Esophagus squamous epithelium (tissue), 5 donors: ENCODE measurements at regions of chr6 and their contacts with region 1.

Region 1: GRCh38 chr6:36442671-36443470 is at the starts of genes KCTD20 and PXT1:
- DNase-seq: peak; percentile 20
- H3K4me3 ChIP-seq: peak within 1 kb of the TSS; percentile 80 to 99 (median 90)
- H3K27ac ChIP-seq: peak within 1 kb of the TSS; percentile 97 to 99 (median 98)
- H3K4me1 ChIP-seq: peaks cover 15 to 61% (median 28%) of the 10 kb centered on the region in 3 donors
- H3K27me3 ChIP-seq: no peaks in the 10 kb centered on the region
- CTCF ChIP-seq: peak in 3 of 6 experiments; percentile 19 to 29 (median 22)
- POLR2A ChIP-seq: peak in 3 of 4 donors; percentile 77 to 91 (median 86)
- total RNA-seq, gene KCTD20: 35.9 to 47.5 (median 41.0) TPM
- total RNA-seq, gene PXT1: not detected

Region 2: GRCh38 chr6:36599791-36600209 is 156.9 kb after region 1 on chr6:
- intact Hi-C with region 1: loop called (anchors 10 kb)
- DNase-seq: no peak
- H3K4me3 ChIP-seq: peak overlapping the region in 3 of 4 donors; percentile 4 to 91 (median 85)
- H3K27ac ChIP-seq: peak overlapping the region; percentile 10 to 64 (median 25)
- H3K4me1 ChIP-seq: peaks cover 17 to 84% (median 63%) of the 10 kb centered on the region in 3 donors
- H3K27me3 ChIP-seq: no peaks in the 10 kb centered on the region
- CTCF ChIP-seq: no peak
- POLR2A ChIP-seq: no peak